Heart left ventricle (tissue), 16 donors: ENCODE measurements at regions of chr11 and their contacts with region 1.

Region 1: GRCh38 chr11:2325719-2326118 is 23.9 kb downstream of the TSPAN32 start:
- DNase-seq: peak in 4 of 5 donors; percentile 64 to 85 (median 74)
- ATAC-seq: peak; percentile 96 to 99 (median 98)
- H3K4me3 ChIP-seq: no peak overlapping the region
- H3K27ac ChIP-seq: peak overlapping the region in 8 of 12 donors; percentile 25 to 73 (median 60)
- H3K4me1 ChIP-seq: peaks cover 0 to 18% (median 6%) of the 10 kb centered on the region in 12 donors
- H3K27me3 ChIP-seq: no peaks in the 10 kb centered on the region
- CTCF ChIP-seq: no peak
- POLR2A ChIP-seq: no peak

Region 2: GRCh38 chr11:2039198-2039759 is 286.4 kb before region 1 on chr11:
- intact Hi-C with region 1: no loop called
- DNase-seq: no peak
- ATAC-seq: no peak
- H3K4me3 ChIP-seq: no peak overlapping the region
- H3K27ac ChIP-seq: no peak overlapping the region
- H3K4me1 ChIP-seq: no peaks in the 10 kb centered on the region
- H3K27me3 ChIP-seq: peaks cover 0 to 3% (median 0%) of the 10 kb centered on the region in 9 donors
- CTCF ChIP-seq: no peak
- POLR2A ChIP-seq: no peak

Region 3: GRCh38 chr11:2186669-2187279 is 138.9 kb before region 1 on chr11:
- intact Hi-C with region 1: no loop called
- DNase-seq: no peak
- ATAC-seq: peak in 3 of 4 donors; percentile 52 to 72 (median 59)
- H3K4me3 ChIP-seq: no peak overlapping the region
- H3K27ac ChIP-seq: no peak overlapping the region
- H3K4me1 ChIP-seq: peaks cover 0 to 18% (median 0%) of the 10 kb centered on the region in 12 donors
- H3K27me3 ChIP-seq: peaks cover 0 to 32% (median 6%) of the 10 kb centered on the region in 9 donors
- CTCF ChIP-seq: peak; percentile 41 to 62 (median 53)
- POLR2A ChIP-seq: no peak

Region 4: GRCh38 chr11:2249189-2249916 is 76.4 kb before region 1 on chr11:
- intact Hi-C with region 1: no loop called
- DNase-seq: peak in 1 of 5 donors; percentile 52
- ATAC-seq: no peak
- H3K4me3 ChIP-seq: no peak overlapping the region
- H3K27ac ChIP-seq: no peak overlapping the region
- H3K4me1 ChIP-seq: no peaks in the 10 kb centered on the region
- H3K27me3 ChIP-seq: peaks cover 0 to 19% (median 3%) of the 10 kb centered on the region in 9 donors
- CTCF ChIP-seq: no peak
- POLR2A ChIP-seq: no peak

Region 5: DNA sequence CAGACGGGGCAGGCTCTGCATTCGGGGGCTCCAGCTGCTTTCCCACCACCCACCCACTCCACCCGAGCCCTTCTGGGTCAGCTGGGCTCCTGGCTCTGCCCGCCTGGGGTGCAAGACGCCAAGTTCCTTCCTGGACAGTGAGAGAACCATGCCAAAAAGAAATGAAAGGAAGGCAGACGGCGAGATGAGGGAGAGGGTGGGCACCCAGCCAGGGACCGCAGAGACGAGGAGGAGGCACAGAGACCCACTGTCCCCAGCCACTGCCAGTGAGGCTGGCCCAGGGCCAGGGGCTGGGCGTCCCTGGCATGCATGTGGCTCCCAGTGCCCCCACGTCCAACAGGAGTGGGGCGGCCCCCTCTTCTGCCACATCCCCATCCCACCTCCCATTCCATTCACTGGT is 40.5 kb after region 1 on chr11:
- intact Hi-C with region 1: loop called in 6 of 10 experiments (anchors 5 kb)
- DNase-seq: peak in 2 of 5 donors; percentile 45 to 66
- ATAC-seq: peak in 1 of 4 donors; percentile 32
- H3K4me3 ChIP-seq: no peak overlapping the region
- H3K27ac ChIP-seq: no peak overlapping the region
- H3K4me1 ChIP-seq: peaks cover 0 to 27% (median 10%) of the 10 kb centered on the region in 12 donors
- H3K27me3 ChIP-seq: no peaks in the 10 kb centered on the region
- CTCF ChIP-seq: no peak
- POLR2A ChIP-seq: no peak